Transverse colon (tissue), 4 donors: ENCODE measurements at regions of chr4 and their contacts with region 1.

Region 1: DNA sequence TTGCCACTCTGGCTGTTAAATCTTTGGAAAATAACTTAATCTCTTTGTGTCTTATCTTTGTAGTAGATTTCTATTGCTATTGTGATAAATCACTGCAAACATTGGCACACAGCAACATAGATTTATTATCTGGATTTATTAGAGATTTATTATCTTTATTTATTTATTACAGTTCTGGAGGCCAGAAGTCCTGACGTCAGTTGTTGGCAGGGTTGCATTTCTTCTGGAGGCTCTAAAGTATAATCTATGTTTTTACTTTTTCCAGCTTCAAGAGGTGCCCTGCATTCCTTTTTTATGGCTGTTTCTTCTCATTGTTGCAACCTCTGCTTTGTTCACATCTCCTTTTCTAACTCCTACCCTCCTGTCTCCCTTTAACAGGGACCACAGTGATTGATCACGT is 542.8 kb downstream of the GRXCR1 start:
- DNase-seq: no peak
- H3K4me3 ChIP-seq: no peak overlapping the region
- H3K27ac ChIP-seq: no peak overlapping the region
- H3K4me1 ChIP-seq: no peaks in the 10 kb centered on the region
- H3K27me3 ChIP-seq: no peaks in the 10 kb centered on the region
- CTCF ChIP-seq: no peak
- EP300 ChIP-seq: no peak
- POLR2A ChIP-seq: no peak

Region 2: DNA sequence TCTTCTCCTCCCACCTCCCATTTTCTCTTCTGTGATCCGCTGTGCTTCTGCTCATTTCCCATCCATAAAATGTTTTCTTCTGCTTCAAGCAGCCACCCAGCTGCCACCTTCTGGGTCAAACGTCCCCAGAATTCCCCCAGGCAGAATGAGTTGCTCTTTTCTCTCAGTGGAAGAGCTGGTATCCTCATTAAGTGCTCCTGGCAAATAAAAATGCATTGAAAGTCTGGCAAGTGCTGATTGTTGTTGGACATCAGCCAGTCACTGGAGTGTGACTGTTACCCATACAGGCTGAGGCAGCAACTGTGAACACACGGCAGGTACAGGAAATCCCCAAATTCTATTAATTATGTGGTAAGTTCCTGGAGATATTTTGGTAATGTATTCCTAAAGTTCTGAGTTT is 1844.7 kb before region 1 on chr4:
- in situ Hi-C with region 1: no loop called
- intact Hi-C with region 1: loop called (anchors 10 kb)
- DNase-seq: no peak
- H3K4me3 ChIP-seq: no peak overlapping the region
- H3K27ac ChIP-seq: no peak overlapping the region
- H3K4me1 ChIP-seq: peaks cover 0 to 6% (median 0%) of the 10 kb centered on the region in 4 donors
- H3K27me3 ChIP-seq: no peaks in the 10 kb centered on the region
- CTCF ChIP-seq: no peak
- EP300 ChIP-seq: no peak
- POLR2A ChIP-seq: no peak